Activated CD4-positive, alpha-beta T cell treated with anti-CD3 and anti-CD28 coated beads for 36 hours (primary cell): ENCODE measurements at regions of chr11 and their contacts with region 1.

Region 1: GRCh38 chr11:121383716-121384115 is 68.4 kb upstream of the SORL1 start:
- DNase-seq: no peak
- ATAC-seq: no peak
- H3K4me3 Mint-ChIP-seq: no peak overlapping the region
- H3K27ac Mint-ChIP-seq: no peak overlapping the region
- H3K4me1 Mint-ChIP-seq: peaks cover 16% of the 10 kb centered on the region
- H3K27me3 Mint-ChIP-seq: no peaks in the 10 kb centered on the region

Region 2: DNA sequence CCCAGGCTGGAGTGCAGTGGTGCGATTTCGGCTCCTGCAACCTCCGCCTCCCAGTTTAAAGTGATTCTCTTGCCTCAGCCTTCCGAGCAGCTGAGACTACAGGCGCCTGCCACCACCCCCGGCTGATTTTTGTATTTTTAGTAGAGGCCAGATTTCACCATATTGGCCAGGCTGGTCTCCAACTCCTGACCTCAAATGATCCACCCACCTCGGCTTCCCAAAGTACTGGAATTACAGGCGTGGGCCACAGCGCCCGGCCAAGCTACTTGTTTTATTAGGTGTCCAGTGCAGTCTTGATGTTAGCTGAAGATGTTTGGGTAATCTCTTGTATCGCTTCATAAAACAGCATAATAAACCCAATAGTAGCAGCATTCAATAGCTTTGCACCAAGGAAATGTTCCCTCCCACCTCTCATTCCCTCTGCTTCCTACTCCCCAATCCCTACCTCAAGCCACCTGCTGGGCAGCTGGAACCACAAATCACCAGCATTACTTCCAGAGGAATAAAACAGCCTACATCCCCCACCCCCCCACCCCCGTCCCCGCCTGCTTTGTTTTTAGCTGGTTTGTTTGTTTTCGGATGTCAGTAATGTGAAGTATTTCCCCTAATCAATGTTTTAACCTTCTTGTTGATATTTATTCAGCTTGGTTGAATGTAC is 883.2 kb before region 1 on chr11:
- CTCF ChIA-PET with region 1: no interaction called
- POLR2A ChIA-PET with region 1: no interaction called
- intact Hi-C with region 1: no loop called
- DNase-seq: no peak
- ATAC-seq: no peak
- H3K4me3 Mint-ChIP-seq: no peak overlapping the region
- H3K27ac Mint-ChIP-seq: no peak overlapping the region
- H3K4me1 Mint-ChIP-seq: no peaks in the 10 kb centered on the region
- H3K27me3 Mint-ChIP-seq: peaks cover 33% of the 10 kb centered on the region

Region 3: GRCh38 chr11:121241343-121242211 is 142.1 kb before region 1 on chr11:
- CTCF ChIA-PET with region 1: no interaction called
- POLR2A ChIA-PET with region 1: no interaction called
- intact Hi-C with region 1: no loop called
- DNase-seq: no peak
- ATAC-seq: no peak
- H3K4me3 Mint-ChIP-seq: no peak overlapping the region
- H3K27ac Mint-ChIP-seq: no peak overlapping the region
- H3K4me1 Mint-ChIP-seq: peaks cover 15% of the 10 kb centered on the region
- H3K27me3 Mint-ChIP-seq: peaks cover 8% of the 10 kb centered on the region

Region 4: GRCh38 chr11:121367001-121367843 is 16.5 kb before region 1 on chr11:
- CTCF ChIA-PET with region 1: interaction called, 11 read pairs
- POLR2A ChIA-PET with region 1: no interaction called
- intact Hi-C with region 1: no loop called
- DNase-seq: peak; percentile 60
- ATAC-seq: peak; percentile 93
- H3K4me3 Mint-ChIP-seq: peak overlapping the region; percentile 35
- H3K27ac Mint-ChIP-seq: peak overlapping the region; percentile 86
- H3K4me1 Mint-ChIP-seq: peaks cover 42% of the 10 kb centered on the region
- H3K27me3 Mint-ChIP-seq: no peaks in the 10 kb centered on the region